IMR-90 (cell line): ENCODE measurements at regions of chr5 and their contacts with region 1.

Region 1: GRCh38 chr5:121748686-121749085 is 103.0 kb upstream of the FTMT start:
- DNase-seq: no peak
- ATAC-seq: no peak
- H3K4me3 ChIP-seq: no peak overlapping the region
- H3K27ac ChIP-seq: no peak overlapping the region
- H3K4me1 ChIP-seq: no peaks in the 10 kb centered on the region
- H3K27me3 ChIP-seq: no peaks in the 10 kb centered on the region
- CTCF ChIP-seq: no peak
- POLR2A ChIP-seq: no peak
- RAD21 ChIP-seq: no peak

Region 2: DNA sequence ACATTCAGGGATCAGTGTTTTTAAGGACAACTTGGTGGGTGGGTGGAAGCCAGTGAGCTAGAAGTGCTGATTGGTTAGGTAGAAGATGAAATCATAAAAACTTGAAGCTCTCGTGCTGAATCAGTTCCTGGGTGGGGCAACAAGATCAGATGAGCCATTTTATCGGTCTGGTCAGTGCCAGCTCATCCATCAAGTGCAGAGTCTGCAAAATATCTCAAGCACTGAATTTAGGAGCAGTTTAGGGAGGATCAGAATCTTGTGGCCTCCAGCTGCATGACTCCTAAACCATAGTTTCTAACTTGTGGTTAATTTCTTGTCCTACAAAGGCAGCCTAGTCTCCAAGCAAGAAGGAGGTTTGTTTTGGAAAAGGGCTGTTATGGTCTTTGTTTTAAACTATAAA is 1952.9 kb before region 1 on chr5:
- CTCF ChIA-PET with region 1: interaction called, 10 read pairs
- POLR2A ChIA-PET with region 1: no interaction called
- dilution Hi-C with region 1: no loop called
- in situ Hi-C with region 1: no loop called
- intact Hi-C with region 1: no loop called
- DNase-seq: no peak
- ATAC-seq: no peak
- H3K4me3 ChIP-seq: no peak overlapping the region
- H3K27ac ChIP-seq: no peak overlapping the region
- H3K4me1 ChIP-seq: no peaks in the 10 kb centered on the region
- H3K27me3 ChIP-seq: no peaks in the 10 kb centered on the region
- CTCF ChIP-seq: no peak
- POLR2A ChIP-seq: no peak
- RAD21 ChIP-seq: no peak

Region 3: DNA sequence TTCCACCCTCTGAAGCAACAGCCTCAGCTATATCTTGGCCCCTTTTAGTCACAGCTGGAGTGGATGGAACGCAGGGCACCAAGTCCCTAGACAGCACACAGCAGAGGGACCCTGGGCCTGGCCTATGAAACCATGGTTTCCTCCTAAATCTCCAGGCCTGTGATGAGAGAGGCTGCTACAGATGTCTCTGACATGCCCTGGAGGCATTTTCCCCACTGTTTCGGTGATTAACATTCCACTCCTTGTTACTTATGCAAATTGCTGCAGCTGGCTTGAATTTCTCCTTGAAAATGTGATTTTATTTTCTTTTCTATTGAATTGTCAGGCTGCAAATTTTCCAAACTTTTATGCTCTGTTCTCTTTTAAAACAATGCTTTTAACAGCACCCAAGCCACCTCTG is 899.8 kb before region 1 on chr5:
- CTCF ChIA-PET with region 1: interaction called, 10 read pairs
- POLR2A ChIA-PET with region 1: no interaction called
- dilution Hi-C with region 1: no loop called
- in situ Hi-C with region 1: no loop called
- intact Hi-C with region 1: no loop called
- DNase-seq: no peak
- ATAC-seq: no peak
- H3K4me3 ChIP-seq: no peak overlapping the region
- H3K27ac ChIP-seq: no peak overlapping the region
- H3K4me1 ChIP-seq: no peaks in the 10 kb centered on the region
- H3K27me3 ChIP-seq: no peaks in the 10 kb centered on the region
- CTCF ChIP-seq: no peak
- POLR2A ChIP-seq: no peak
- RAD21 ChIP-seq: no peak